ENCODE measurements at regions of chr13 and their contacts with region 1.

Region 1: DNA sequence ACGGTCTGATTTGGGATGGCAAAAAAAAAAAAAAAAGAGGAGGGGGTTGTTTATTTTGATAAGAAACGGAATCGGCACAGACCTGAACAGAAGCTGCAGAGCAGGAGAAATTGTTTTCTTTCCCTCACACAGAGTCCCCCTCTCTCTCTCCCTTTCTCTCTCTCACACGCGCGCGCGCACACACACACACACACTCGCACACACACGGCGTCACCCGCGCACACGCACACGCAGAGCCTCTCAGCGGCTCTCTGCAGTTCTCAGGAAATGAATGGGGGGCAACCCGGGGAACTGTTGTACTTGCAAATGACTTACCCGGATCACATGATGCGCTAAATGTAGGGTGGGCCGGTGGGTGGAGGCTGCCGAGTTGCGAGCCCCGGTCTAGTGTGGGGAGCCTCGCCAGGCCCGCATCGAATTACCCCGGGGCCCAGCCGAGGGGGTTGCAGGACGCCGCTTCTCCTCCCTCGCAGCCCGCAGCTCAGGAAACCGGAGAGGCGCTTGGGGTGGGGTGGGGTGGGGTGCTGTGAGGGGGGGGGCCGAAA is 475 bp downstream of the KLF12 start:
- DNase-seq: peak; percentile 77 to 97 (median 85)
- ATAC-seq: peak; percentile 55
- H3K4me3 ChIP-seq: peak overlapping the region; percentile 88
- H3K4me3 Mint-ChIP-seq: peak overlapping the region; percentile 100
- H3K27ac ChIP-seq: peak overlapping the region; percentile 86 to 90
- H3K27ac Mint-ChIP-seq: no peak overlapping the region
- H3K4me1 ChIP-seq: peaks cover 31% of the 10 kb centered on the region
- H3K4me1 Mint-ChIP-seq: peaks cover 42% of the 10 kb centered on the region
- H3K27me3 ChIP-seq: no peaks in the 10 kb centered on the region
- H3K27me3 Mint-ChIP-seq: peaks cover 6% of the 10 kb centered on the region
- CTCF ChIP-seq: no peak

Region 2: DNA sequence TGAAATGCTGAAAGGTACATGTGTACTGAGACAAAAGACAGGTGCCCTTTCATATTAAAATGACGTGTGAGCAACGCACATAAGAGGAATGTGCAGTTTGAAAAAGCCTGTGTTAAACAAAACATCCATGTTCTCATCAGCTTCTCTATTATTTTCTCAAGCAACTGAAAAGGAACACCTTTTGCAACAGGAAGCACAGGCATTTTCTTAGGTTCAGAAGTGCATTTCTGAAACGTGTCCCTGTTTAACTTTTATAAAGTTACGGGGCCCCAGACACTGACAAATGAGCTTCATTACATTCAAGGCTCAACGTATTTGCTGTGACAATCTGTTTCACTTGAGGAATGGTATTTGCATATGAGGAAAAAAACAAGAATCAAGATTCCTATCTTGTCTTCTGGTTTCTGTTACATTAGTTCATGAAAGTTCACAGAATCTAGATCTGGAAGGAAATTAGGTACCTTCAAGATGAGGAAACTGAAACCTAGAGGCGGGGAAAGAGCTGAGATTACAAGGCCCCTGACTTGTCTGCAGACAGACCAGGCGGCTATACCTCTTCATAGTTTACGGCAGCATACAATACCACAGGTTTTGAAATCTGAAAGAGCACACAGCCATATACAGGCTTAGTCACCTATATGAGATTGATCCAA is 431.2 kb before region 1 on chr13:
- CTCF ChIA-PET with region 1: no interaction called
- POLR2A ChIA-PET with region 1: no interaction called
- intact Hi-C with region 1: loop called in 1 of 2 experiments (anchors 5 kb)
- DNase-seq: peak; percentile 8 to 81 (median 38)
- ATAC-seq: peak; percentile 84
- H3K4me3 ChIP-seq: peak overlapping the region; percentile 40
- H3K4me3 Mint-ChIP-seq: peak overlapping the region; percentile 83
- H3K27ac ChIP-seq: peak overlapping the region; percentile 70 to 76
- H3K27ac Mint-ChIP-seq: peak overlapping the region; percentile 98
- H3K4me1 ChIP-seq: peaks cover 21% of the 10 kb centered on the region
- H3K4me1 Mint-ChIP-seq: peaks cover 53% of the 10 kb centered on the region
- H3K27me3 ChIP-seq: no peaks in the 10 kb centered on the region
- H3K27me3 Mint-ChIP-seq: no peaks in the 10 kb centered on the region
- CTCF ChIP-seq: no peak

Region 3: DNA sequence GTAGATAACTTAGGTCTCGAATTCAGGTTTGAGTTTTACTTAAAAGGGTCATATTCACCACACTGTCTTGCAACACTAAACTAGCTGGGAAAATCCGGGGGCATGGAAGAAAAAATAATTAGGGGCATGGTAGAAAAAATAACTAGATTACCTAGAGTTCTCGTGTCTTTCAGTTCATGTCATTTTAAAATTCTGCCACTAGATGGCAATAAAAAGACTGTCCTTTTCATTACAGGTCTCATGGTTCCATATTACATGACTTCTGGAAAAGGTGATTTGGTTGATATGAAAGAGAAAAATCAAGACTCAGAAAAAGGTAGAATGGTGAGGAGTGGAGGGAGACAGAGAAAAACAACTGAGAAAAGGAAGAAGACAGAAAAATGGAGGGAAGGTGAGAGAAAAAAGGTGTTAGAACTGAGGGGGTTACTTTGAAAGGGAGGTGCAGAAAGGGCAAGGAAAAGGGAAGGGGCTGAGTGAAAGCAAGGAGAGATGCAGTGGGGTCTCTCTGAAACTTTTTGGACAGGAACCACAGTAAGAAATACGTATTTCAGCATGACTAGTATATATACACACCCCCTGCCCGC is 298.5 kb before region 1 on chr13:
- CTCF ChIA-PET with region 1: no interaction called
- POLR2A ChIA-PET with region 1: interaction called, 5 read pairs
- intact Hi-C with region 1: loop called (anchors 5 kb)
- DNase-seq: peak in 3 of 14 experiments; percentile 65 to 69 (median 68)
- ATAC-seq: peak; percentile 73
- H3K4me3 ChIP-seq: no peak overlapping the region
- H3K4me3 Mint-ChIP-seq: no peak overlapping the region
- H3K27ac ChIP-seq: no peak overlapping the region
- H3K27ac Mint-ChIP-seq: no peak overlapping the region
- H3K4me1 ChIP-seq: peaks cover 7% of the 10 kb centered on the region
- H3K4me1 Mint-ChIP-seq: peaks cover 59% of the 10 kb centered on the region
- H3K27me3 ChIP-seq: no peaks in the 10 kb centered on the region
- H3K27me3 Mint-ChIP-seq: no peaks in the 10 kb centered on the region
- CTCF ChIP-seq: peak; percentile 81

Region 4: DNA sequence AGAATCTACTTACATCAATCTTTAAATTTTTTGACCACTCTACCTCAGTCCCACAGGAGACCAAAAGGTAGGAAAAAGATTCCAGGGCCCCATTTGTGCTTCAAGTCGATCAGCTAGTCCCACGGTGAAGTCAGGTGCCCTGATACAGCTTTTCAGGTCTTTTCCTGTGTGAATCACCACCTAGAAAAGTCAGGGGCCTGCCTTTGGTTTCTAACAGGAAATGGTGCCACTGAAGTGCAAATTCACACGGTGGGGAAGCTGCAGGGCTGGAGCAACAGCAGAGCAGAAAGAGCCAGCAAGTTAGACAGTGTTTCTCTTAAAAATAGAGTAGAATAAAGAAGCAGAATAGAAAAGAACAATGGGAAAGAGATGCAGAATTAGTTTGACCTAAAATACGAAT is 107.0 kb before region 1 on chr13:
- CTCF ChIA-PET with region 1: no interaction called
- POLR2A ChIA-PET with region 1: interaction called, 33 read pairs
- intact Hi-C with region 1: loop called (anchors 2 to 5 kb)
- DNase-seq: peak; percentile 44 to 88 (median 66)
- ATAC-seq: peak; percentile 95
- H3K4me3 ChIP-seq: peak overlapping the region; percentile 29
- H3K4me3 Mint-ChIP-seq: peak overlapping the region; percentile 82
- H3K27ac ChIP-seq: peak overlapping the region; percentile 66 to 78
- H3K27ac Mint-ChIP-seq: peak overlapping the region; percentile 89
- H3K4me1 ChIP-seq: peaks cover 11% of the 10 kb centered on the region
- H3K4me1 Mint-ChIP-seq: peaks cover 90% of the 10 kb centered on the region
- H3K27me3 ChIP-seq: no peaks in the 10 kb centered on the region
- H3K27me3 Mint-ChIP-seq: no peaks in the 10 kb centered on the region
- CTCF ChIP-seq: no peak

Region 5: DNA sequence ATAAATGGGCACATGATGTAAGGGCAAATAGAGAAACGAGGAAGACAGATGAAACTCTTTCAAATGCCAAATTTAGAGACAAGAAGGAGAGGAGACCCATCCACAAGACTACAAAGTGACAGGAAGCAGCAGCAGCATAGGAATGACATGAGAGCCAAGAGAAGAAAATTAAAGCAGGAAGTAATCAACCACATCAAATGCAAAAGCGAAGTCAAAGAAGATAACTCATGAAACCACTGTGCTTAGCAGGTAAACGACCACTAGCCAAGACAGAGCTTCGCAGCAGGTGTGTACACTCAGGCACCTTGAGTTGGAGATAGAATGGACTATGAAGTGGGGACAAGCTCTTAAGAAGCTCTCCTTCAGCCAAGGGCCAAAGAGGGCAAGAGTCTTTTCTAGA is 63.7 kb before region 1 on chr13:
- CTCF ChIA-PET with region 1: interaction called, 3 read pairs
- POLR2A ChIA-PET with region 1: interaction called, 31 read pairs
- intact Hi-C with region 1: loop called (anchors 2 to 5 kb)
- DNase-seq: peak in 10 of 14 experiments; percentile 6 to 86 (median 33)
- ATAC-seq: peak; percentile 85
- H3K4me3 ChIP-seq: peak overlapping the region; percentile 1
- H3K4me3 Mint-ChIP-seq: peak overlapping the region; percentile 73
- H3K27ac ChIP-seq: peak overlapping the region; percentile 17 to 36
- H3K27ac Mint-ChIP-seq: peak overlapping the region; percentile 80
- H3K4me1 ChIP-seq: peaks cover 55% of the 10 kb centered on the region
- H3K4me1 Mint-ChIP-seq: peaks cover 83% of the 10 kb centered on the region
- H3K27me3 ChIP-seq: no peaks in the 10 kb centered on the region
- H3K27me3 Mint-ChIP-seq: no peaks in the 10 kb centered on the region
- CTCF ChIP-seq: no peak

Region 6: DNA sequence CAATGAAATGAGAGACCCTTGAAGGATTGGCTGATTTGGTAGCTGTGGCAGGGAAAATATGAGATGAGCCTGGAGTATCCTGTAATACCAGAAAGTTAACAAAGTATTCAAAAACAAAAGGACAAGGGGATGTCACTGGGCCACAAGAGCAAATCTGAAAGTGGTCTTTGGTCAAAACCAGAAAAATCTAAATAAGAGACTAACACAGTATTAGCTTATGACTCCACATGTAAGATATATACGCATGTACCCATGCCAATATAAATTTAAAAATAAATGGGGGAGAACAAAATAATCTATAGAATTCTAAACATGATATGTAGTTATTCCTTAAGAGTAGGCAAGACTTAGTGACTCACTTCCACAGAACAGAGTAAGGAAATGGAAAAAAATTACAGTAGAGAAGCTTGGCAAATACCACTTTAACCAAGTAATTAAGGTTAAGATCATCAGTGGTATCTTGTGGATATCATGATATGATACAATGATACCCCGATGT is 16.5 kb before region 1 on chr13:
- CTCF ChIA-PET with region 1: no interaction called
- POLR2A ChIA-PET with region 1: interaction called, 3 read pairs
- intact Hi-C with region 1: loop called (anchors 2 kb)
- DNase-seq: no peak
- ATAC-seq: no peak
- H3K4me3 ChIP-seq: no peak overlapping the region
- H3K4me3 Mint-ChIP-seq: no peak overlapping the region
- H3K27ac ChIP-seq: no peak overlapping the region
- H3K27ac Mint-ChIP-seq: no peak overlapping the region
- H3K4me1 ChIP-seq: peaks cover 18% of the 10 kb centered on the region
- H3K4me1 Mint-ChIP-seq: peaks cover 76% of the 10 kb centered on the region
- H3K27me3 ChIP-seq: no peaks in the 10 kb centered on the region
- H3K27me3 Mint-ChIP-seq: no peaks in the 10 kb centered on the region
- CTCF ChIP-seq: no peak

Region 7: GRCh38 chr13:74246487-74246886 is 112.8 kb after region 1 on chr13:
- CTCF ChIA-PET with region 1: no interaction called
- POLR2A ChIA-PET with region 1: interaction called, 36 read pairs
- intact Hi-C with region 1: no loop called
- DNase-seq: peak in 5 of 14 experiments; percentile 13 to 44 (median 27)
- ATAC-seq: no peak
- H3K4me3 ChIP-seq: peak overlapping the region; percentile 13
- H3K4me3 Mint-ChIP-seq: peak overlapping the region; percentile 68
- H3K27ac ChIP-seq: peak overlapping the region; percentile 59 to 78
- H3K27ac Mint-ChIP-seq: peak overlapping the region; percentile 91
- H3K4me1 ChIP-seq: peaks cover 71% of the 10 kb centered on the region
- H3K4me1 Mint-ChIP-seq: peaks cover 95% of the 10 kb centered on the region
- H3K27me3 ChIP-seq: no peaks in the 10 kb centered on the region
- H3K27me3 Mint-ChIP-seq: no peaks in the 10 kb centered on the region
- CTCF ChIP-seq: no peak

Region 8: DNA sequence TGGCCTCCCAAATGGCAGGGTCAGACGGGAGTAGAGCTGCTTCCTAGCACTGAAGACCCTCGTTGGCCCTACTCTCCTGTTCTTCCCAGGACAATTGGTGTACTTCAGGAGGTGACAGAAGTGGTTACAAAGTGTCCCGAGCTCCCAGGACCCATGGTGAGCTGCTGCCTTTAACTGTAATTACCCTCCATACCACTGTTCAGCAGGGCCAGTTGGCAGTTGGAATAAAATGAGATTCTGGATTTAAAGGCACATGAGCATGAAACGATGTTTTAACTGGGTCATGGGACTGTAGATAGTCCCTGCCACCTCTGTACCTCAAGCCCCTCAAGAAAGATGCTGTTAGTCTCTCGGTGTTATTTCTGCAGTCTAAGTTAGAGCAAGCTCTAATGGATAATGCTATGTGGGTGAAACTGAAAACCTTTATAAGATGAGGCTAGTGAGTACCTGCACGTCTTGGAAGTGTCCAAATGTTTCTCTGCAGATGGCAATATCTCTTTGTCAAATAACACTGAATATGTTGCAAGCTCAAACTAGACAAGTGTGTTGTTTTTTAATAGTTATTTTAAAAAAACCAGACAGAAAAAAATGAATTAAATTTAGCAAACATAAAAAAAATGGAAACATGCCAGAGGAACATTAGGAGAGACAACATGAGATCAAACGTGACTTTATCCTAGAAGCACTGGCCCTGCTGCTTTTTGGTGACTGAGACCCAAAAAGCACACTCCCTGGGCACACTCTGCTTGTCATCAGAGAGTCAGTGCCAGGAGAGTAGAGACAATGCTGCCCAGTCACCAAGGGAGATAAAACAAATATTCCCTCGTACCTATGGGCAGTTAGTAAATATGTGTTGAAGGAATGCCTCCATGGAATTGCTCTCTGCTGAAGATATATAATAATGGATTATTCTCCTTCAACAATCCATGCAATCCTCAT is 1768.7 kb after region 1 on chr13:
- CTCF ChIA-PET with region 1: no interaction called
- POLR2A ChIA-PET with region 1: no interaction called
- intact Hi-C with region 1: no loop called
- DNase-seq: no peak
- ATAC-seq: no peak
- H3K4me3 ChIP-seq: no peak overlapping the region
- H3K4me3 Mint-ChIP-seq: no peak overlapping the region
- H3K27ac ChIP-seq: no peak overlapping the region
- H3K27ac Mint-ChIP-seq: no peak overlapping the region
- H3K4me1 ChIP-seq: no peaks in the 10 kb centered on the region
- H3K4me1 Mint-ChIP-seq: no peaks in the 10 kb centered on the region
- H3K27me3 ChIP-seq: no peaks in the 10 kb centered on the region
- H3K27me3 Mint-ChIP-seq: peaks cover 33% of the 10 kb centered on the region
- CTCF ChIP-seq: no peak

Measured in CD4-positive, alpha-beta T cell (primary cell).